Endothelial cell of umbilical vein (primary cell): ENCODE measurements at regions of chr19 and their contacts with region 1.

Region 1: GRCh38 chr19:14147797-14148605 is 11.6 kb upstream of the ASF1B start:
- DNase-seq: peak; percentile 77
- H3K4me3 ChIP-seq: no peak overlapping the region
- H3K27ac ChIP-seq: peak overlapping the region; percentile 43
- H3K4me1 ChIP-seq: peaks cover 24% of the 10 kb centered on the region
- H3K27me3 ChIP-seq: no peaks in the 10 kb centered on the region
- CTCF ChIP-seq: peak; percentile 86 to 98
- POLR2A ChIP-seq: no peak

Region 2: GRCh38 chr19:14160017-14160703 is 12.2 kb after region 1 on chr19:
- CTCF ChIA-PET with region 1: interaction called, 11 read pairs
- POLR2A ChIA-PET with region 1: interaction called, 5 read pairs
- dilution Hi-C with region 1: no loop called
- intact Hi-C with region 1: no loop called
- DNase-seq: no peak
- H3K4me3 ChIP-seq: no peak overlapping the region
- H3K27ac ChIP-seq: no peak overlapping the region
- H3K4me1 ChIP-seq: no peaks in the 10 kb centered on the region
- H3K27me3 ChIP-seq: no peaks in the 10 kb centered on the region
- CTCF ChIP-seq: no peak
- POLR2A ChIP-seq: no peak

Region 3: DNA sequence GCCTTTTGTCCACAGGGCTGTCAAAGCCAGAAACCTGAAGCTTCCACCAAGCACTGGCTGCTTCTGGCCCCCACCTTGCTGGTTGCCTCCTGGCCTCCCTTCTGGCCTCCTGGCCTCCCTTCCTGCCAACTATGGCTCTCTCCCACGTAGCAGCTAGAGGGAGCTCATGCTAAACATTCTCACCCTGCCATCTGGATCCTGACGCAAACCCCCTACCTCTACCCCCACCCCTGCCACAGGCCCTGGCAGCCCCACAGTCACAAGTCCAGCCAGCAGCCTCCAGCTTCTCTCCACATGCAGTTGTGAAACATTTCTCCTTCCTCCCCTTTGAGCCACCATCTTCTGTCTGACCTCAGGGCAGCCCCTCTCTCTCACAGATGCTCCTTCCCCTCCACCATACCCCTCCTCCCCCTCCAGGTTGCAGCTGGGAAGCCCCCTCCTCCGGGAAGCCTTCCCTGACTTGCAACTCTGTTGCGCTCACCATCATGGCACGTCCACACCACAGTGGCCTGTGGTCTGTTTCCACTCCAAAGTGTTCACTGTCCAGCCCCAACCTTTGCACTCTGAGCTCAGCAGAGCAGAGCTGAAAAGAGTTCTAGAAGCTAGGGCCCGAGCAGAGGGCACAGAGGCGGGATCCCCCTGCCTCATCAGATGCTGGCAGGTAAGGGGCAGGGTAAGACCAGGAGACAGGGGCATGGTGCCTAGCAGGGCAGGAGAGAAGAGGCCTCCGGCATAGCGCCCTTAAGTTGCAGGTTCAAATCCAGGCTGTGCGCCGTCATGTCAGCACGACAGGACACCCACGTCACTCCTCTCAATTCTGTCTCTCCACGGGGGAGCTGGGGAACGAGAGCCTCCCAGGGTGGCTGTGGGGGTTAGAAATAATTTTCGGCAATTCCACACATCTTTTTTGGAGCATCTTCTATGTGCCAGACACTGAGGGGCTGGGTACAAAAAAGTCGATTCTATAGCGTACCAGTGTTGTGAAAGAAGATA is 50.7 kb after region 1 on chr19:
- CTCF ChIA-PET with region 1: interaction called, 9 read pairs
- POLR2A ChIA-PET with region 1: no interaction called
- dilution Hi-C with region 1: no loop called
- intact Hi-C with region 1: loop called (anchors 1 kb)
- DNase-seq: no peak
- H3K4me3 ChIP-seq: no peak overlapping the region
- H3K27ac ChIP-seq: no peak overlapping the region
- H3K4me1 ChIP-seq: no peaks in the 10 kb centered on the region
- H3K27me3 ChIP-seq: no peaks in the 10 kb centered on the region
- CTCF ChIP-seq: peak in 1 of 2 donors; percentile 2
- POLR2A ChIP-seq: no peak